Activated CD4-positive, alpha-beta memory T cell treated with anti-CD3 and anti-CD28 coated beads, Interleukin-2, amount 10 ng/mL, durations not matched to agents 7 days and 5 days (primary cell): ENCODE measurements at regions of chr18 and their contacts with region 1.

Region 1: DNA sequence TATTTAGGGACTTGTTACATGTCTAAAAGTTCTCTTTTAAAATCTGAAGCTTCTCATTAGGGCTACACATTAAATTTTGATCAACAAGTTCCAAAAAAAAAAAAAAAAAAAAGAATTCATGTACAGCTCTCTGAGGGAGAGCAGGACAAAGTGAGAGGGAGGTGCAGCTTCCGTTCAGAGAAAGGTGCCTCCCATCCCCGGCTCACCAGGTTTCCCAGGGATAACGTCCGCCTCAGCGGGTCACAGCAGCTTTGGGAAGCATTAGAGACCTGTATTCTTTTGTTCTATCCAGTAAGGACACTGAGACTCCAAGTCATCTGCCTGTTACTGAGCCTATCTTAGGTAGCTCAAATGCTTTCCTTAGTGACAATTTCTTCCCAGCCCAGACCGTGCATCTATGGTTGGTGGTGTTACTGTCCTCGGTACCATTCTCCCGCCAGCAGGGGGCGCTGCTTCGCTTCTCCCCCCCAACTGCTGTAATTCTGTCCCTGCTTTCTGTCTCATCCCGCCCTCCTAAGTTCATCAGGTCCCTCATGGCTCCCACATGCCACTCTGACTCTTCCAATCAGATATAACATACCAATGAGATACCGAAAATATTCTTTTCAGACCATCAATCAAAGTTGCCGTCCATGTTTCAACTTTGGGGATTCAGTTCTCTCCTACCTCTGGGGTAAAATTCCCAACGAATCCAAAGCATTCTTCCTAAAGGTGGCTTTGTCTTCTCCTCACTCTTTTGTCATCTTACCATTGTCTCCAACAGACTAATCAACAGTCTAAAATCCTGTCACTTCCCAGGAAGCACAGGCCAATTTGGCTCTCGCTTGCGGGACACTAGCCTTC is 466.5 kb downstream of the METTL4 start:
- DNase-seq: peak; percentile 53
- H3K4me3 Mint-ChIP-seq: no peak overlapping the region
- H3K27ac Mint-ChIP-seq: no peak overlapping the region
- H3K4me1 Mint-ChIP-seq: no peaks in the 10 kb centered on the region
- H3K27me3 Mint-ChIP-seq: peaks cover 3% of the 10 kb centered on the region

Region 2: DNA sequence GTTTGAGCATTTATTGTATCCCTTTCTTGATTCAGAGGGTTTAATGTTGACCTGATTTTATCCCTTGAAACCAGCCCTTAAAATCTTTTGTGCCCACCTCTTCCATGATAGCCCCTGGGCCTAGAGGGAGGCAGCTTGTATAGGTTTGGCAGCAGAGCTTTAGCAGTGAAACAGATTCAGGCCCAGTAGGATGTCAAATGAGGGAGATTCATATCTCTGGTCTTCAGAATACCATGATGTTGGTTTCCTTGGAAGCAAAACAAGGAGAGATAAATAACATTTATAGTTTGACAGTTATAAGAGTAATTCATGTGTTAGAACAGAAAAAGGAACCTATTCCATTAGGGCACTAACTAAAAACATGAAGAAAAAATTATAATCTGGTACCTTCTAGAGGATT is 182.8 kb before region 1 on chr18:
- CTCF ChIA-PET with region 1: no interaction called
- POLR2A ChIA-PET with region 1: no interaction called
- DNase-seq: no peak
- H3K4me3 Mint-ChIP-seq: no peak overlapping the region
- H3K27ac Mint-ChIP-seq: no peak overlapping the region
- H3K4me1 Mint-ChIP-seq: no peaks in the 10 kb centered on the region
- H3K27me3 Mint-ChIP-seq: no peaks in the 10 kb centered on the region

Region 3: DNA sequence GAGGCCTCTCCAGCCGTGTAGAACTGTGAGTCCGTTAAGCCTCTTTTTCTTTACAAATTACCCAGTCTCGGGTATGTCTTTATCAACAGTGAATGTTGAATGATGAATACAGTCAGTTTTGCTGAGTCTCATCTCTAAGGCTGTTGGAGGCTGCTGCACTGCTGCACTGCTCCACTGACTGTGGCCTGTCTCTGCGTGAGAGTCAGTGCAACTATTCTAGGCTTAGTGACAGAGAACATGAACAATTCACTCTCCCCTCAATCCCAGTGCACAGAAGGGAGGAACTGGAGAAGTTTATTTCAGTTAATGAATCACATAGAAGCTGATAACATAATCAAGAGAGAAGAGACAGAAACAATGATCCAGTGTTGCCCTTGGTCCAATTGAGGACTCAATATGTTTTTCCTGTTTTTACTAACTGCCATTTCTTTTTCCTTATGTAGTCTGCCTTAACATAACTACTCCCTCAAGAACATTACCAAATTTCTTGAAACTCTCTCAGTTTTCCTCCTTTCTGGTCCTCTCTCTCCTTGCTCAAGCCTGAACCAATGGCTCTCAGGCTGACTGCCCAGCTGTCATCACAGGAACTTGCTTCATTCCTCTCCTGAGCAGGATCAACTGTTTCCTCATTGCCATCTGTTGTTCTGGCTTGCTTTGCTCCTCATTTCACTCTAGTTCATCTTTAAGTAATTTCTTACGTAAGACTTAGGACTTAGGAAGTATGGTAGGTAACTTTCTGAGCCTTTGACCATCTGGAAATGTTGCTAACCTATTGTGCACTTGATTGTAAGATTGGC is 16.8 kb before region 1 on chr18:
- CTCF ChIA-PET with region 1: interaction called, 16 read pairs
- POLR2A ChIA-PET with region 1: no interaction called
- DNase-seq: no peak
- H3K4me3 Mint-ChIP-seq: no peak overlapping the region
- H3K27ac Mint-ChIP-seq: no peak overlapping the region
- H3K4me1 Mint-ChIP-seq: no peaks in the 10 kb centered on the region
- H3K27me3 Mint-ChIP-seq: peaks cover 4% of the 10 kb centered on the region

Region 4: DNA sequence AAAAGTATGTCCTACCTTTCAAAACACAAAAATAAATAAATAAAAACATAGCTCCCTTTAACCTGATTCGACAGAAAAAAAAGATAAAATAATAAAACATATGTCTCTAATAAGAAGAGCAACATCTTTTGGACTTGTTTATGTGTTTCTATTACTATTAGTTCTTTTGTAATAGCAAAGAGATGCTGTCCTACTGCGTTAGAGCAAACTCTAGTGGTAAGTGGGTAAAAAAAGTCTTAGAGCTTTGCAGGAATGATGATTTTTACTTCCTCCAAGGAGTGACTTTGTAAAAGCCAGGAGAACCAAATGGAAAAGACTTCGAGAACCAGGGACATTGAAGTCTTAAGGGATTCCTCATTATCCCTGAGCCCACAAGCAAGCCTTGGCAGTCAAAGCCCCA is 16.4 kb after region 1 on chr18:
- CTCF ChIA-PET with region 1: interaction called, 20 read pairs
- POLR2A ChIA-PET with region 1: no interaction called
- DNase-seq: no peak
- H3K4me3 Mint-ChIP-seq: no peak overlapping the region
- H3K27ac Mint-ChIP-seq: no peak overlapping the region
- H3K4me1 Mint-ChIP-seq: no peaks in the 10 kb centered on the region
- H3K27me3 Mint-ChIP-seq: peaks cover 5% of the 10 kb centered on the region

Region 5: DNA sequence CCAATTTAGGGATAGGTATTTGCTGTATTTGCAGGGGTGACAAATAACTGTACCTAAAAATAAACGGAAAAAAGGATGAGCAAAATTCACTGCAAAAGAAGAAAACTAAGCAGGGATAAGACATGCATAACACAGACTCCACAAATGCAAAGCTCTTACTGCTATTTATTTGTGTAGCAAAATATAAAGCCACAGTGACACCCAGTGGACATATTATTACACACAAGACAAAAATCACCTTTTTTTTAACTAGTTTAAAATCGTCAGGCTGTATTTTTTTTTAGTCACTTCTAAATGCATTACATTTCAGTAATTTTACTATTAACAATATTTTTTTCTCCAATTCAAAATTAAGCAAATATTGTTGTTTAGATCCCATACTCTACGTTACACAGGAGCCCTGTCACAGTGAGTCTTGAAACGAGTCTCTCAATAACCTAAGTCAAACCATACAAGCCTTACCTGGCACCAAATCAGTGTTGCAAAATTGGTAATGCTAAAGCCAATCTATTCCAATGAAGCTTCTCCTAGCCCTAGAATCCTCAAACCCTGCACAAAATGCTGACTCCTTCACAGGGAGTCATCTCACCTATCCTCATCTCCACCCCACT is 442.7 kb after region 1 on chr18:
- CTCF ChIA-PET with region 1: interaction called, 13 read pairs
- POLR2A ChIA-PET with region 1: no interaction called
- DNase-seq: no peak
- H3K4me3 Mint-ChIP-seq: no peak overlapping the region
- H3K27ac Mint-ChIP-seq: no peak overlapping the region
- H3K4me1 Mint-ChIP-seq: no peaks in the 10 kb centered on the region
- H3K27me3 Mint-ChIP-seq: no peaks in the 10 kb centered on the region